ENCODE measurements at regions of chr5 and their contacts with region 1.

Region 1: DNA sequence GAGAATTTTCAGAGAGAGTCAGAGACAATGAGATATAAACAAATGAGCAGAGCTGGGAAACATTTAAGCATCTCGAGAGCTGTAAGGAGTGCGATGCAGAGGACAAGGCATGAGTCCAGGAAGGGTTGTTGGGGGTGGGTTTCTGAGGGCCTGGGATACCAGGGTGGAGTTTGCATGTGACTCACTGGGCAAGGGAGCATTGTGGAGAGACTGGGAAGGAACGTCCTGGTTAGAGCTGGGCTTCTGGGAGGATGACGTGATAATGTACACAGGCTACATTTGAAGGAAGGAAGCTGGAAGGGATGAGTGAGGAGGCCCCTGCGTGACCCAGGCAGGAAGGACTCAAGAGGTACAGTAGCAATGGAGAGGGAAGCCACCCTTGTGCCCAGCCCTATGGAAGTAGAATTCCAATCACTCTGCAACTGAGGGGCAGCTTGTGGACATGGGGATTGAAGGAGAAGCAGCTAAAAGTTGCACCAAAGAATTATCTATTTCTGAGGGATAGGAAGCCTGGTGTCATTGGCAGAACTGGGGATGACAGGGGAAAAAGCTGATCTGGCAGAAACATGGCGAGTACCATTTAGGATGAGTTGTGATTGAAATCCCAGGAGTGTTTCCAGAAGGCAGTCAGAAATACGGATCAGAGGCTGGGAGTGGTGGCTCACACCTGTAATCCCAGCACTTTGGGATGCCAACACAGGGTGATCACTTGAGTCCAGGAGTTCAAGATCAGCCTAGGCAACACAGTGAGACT is 59.3 kb upstream of the AFAP1L1 start:
- DNase-seq: peak; percentile 93
- H3K4me3 ChIP-seq: no peak overlapping the region
- H3K27ac ChIP-seq: peak overlapping the region; percentile 64
- H3K4me1 ChIP-seq: peaks cover 36% of the 10 kb centered on the region
- H3K27me3 ChIP-seq: no peaks in the 10 kb centered on the region
- CTCF ChIP-seq: no peak
- POLR2A ChIP-seq: no peak

Region 2: DNA sequence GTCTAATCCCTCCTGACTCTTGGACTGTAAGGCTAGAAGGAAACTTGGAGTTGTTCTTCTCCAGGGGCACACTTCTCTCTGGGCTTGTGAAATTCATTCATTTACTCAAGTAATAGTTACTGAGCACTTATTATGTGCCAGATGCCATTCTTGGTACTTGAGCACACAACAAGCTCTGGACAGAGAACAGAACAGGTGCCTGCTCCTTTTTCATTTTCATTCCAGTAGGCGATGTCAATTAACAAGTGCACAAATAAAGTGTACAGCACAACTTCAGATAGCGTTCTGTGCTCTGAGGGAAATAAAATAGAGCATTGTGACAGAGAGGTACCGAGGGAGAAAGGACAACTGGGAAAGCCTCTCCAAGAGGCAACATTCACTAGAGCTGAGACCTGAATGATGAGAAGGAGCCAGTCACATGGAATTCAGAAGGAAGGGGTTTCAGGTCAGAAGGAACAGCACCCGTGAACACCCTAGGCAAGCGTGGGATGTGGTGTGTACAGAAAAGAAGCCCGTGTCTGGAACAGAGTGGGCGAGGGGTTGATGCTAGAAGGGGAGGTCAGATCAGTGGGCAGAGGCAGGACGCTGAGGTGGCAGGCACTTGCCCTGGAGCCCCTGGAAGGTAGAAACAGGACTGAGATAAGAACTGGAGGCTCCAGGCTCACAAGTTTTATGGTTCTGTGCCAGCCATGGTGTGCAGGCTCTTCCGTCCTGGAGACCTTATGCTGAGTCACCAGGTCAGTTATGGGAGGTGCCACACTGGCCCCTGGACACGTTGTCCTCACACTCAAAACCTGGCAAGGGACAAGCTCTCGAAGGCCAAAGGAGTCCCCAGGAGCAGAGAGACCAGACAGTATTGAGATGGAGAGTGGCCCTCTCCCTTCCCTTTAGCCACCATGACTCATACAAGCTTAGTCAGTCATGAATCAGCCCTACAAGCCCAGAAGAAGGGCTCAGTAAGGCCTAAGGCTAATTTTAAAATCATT is 78.3 kb before region 1 on chr5:
- CTCF ChIA-PET with region 1: interaction called, 6 read pairs
- POLR2A ChIA-PET with region 1: no interaction called
- dilution Hi-C with region 1: no loop called
- intact Hi-C with region 1: loop called (anchors 1 kb)
- DNase-seq: peak; percentile 79
- H3K4me3 ChIP-seq: no peak overlapping the region
- H3K27ac ChIP-seq: peak overlapping the region; percentile 96
- H3K4me1 ChIP-seq: peaks cover 36% of the 10 kb centered on the region
- H3K27me3 ChIP-seq: no peaks in the 10 kb centered on the region
- CTCF ChIP-seq: no peak
- POLR2A ChIP-seq: no peak

Region 3: DNA sequence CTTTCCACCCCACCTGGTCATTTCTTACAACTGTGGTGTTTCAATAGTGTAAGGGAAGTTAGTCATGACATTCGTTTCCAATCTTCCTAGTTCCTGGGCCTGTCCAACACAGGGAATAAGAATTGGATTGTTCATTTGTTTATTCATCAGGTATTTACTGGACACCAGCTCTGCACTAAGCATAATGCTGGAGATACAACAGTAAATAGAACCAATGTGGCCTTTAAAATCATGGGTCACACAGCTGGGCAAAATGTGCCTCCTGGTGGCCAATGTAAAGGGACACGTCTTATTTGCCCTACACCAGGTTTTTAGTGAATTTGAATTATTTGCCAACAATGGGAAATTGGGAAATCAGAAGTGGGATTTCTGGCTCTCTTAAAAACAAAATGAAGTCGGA is 60.7 kb before region 1 on chr5:
- CTCF ChIA-PET with region 1: interaction called, 6 read pairs
- POLR2A ChIA-PET with region 1: no interaction called
- dilution Hi-C with region 1: no loop called
- intact Hi-C with region 1: loop called (anchors 1 kb)
- DNase-seq: peak; percentile 55
- H3K4me3 ChIP-seq: no peak overlapping the region
- H3K27ac ChIP-seq: peak overlapping the region; percentile 86
- H3K4me1 ChIP-seq: peaks cover 42% of the 10 kb centered on the region
- H3K27me3 ChIP-seq: no peaks in the 10 kb centered on the region
- CTCF ChIP-seq: peak; percentile 20 to 32
- POLR2A ChIP-seq: no peak

Region 4: GRCh38 chr5:149174847-149175234 is 37.5 kb before region 1 on chr5:
- CTCF ChIA-PET with region 1: no interaction called
- POLR2A ChIA-PET with region 1: no interaction called
- dilution Hi-C with region 1: no loop called
- intact Hi-C with region 1: loop called (anchors 1 kb)
- DNase-seq: no peak
- H3K4me3 ChIP-seq: no peak overlapping the region
- H3K27ac ChIP-seq: peak overlapping the region; percentile 81
- H3K4me1 ChIP-seq: peaks cover 36% of the 10 kb centered on the region
- H3K27me3 ChIP-seq: no peaks in the 10 kb centered on the region
- CTCF ChIP-seq: no peak
- POLR2A ChIP-seq: no peak

Region 5: GRCh38 chr5:149240354-149240998 is 28.1 kb after region 1 on chr5:
- CTCF ChIA-PET with region 1: no interaction called
- POLR2A ChIA-PET with region 1: no interaction called
- dilution Hi-C with region 1: no loop called
- intact Hi-C with region 1: no loop called
- DNase-seq: no peak
- H3K4me3 ChIP-seq: no peak overlapping the region
- H3K27ac ChIP-seq: no peak overlapping the region
- H3K4me1 ChIP-seq: peaks cover 9% of the 10 kb centered on the region
- H3K27me3 ChIP-seq: no peaks in the 10 kb centered on the region
- CTCF ChIP-seq: no peak
- POLR2A ChIP-seq: no peak

Measured in endothelial cell of umbilical vein (primary cell).